ENCODE measurements at regions of chr22 and their contacts with region 1.

Region 1: DNA sequence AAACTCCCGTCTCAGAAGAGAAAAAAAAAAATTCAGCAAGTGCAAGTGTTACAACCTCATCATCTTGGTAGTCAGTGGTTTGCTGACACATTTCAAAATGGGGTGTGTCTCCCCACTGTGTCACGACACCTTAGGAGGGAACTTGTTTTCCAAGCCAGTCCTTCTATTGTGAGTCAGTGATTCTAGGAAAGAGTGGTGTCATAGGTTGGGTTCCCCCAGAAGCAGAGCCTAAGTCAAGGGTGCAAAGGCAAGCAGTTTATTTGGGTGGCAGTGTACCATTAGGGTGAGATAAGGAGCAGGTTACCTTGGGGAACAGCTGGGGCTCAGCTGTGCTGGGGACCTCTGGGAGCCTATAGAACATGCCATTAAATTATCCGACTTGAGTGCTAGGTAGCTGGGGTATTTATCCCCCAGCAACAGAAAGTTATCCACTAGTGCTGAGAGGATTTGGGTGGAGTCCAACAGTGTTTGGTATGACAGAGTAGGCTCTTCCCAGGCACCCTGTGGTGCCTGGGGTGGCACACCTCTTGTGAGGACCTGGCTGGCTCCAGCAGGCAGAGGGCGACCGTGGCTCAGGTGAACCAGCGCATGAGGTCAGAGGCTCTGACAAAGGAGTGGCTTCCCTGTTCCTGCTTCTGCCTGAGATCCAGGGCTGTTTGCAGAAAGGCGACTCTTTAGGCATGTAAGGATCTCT is 41.7 kb downstream of the KIAA1671 start:
- DNase-seq: peak; percentile 75 to 97
- H3K4me3 ChIP-seq: no peak overlapping the region
- H3K27ac ChIP-seq: peak overlapping the region; percentile 96
- H3K4me1 ChIP-seq: peaks cover 75% of the 10 kb centered on the region
- H3K27me3 ChIP-seq: no peaks in the 10 kb centered on the region
- CTCF ChIP-seq: peak; percentile 65

Region 2: GRCh38 chr22:25027959-25028840 is 34.0 kb after region 1 on chr22:
- CTCF ChIA-PET with region 1: no interaction called
- POLR2A ChIA-PET with region 1: no interaction called
- intact Hi-C with region 1: loop called (anchors 2 kb)
- DNase-seq: no peak
- H3K4me3 ChIP-seq: no peak overlapping the region
- H3K27ac ChIP-seq: no peak overlapping the region
- H3K4me1 ChIP-seq: peaks cover 28% of the 10 kb centered on the region
- H3K27me3 ChIP-seq: no peaks in the 10 kb centered on the region
- CTCF ChIP-seq: peak; percentile 42

Region 3: GRCh38 chr22:25193548-25193947 is 199.3 kb after region 1 on chr22:
- CTCF ChIA-PET with region 1: no interaction called
- POLR2A ChIA-PET with region 1: no interaction called
- intact Hi-C with region 1: no loop called
- DNase-seq: no peak
- H3K4me3 ChIP-seq: no peak overlapping the region
- H3K27ac ChIP-seq: no peak overlapping the region
- H3K4me1 ChIP-seq: no peaks in the 10 kb centered on the region
- H3K27me3 ChIP-seq: no peaks in the 10 kb centered on the region
- CTCF ChIP-seq: no peak

Measured in PC-9 (cell line).